Ovary (tissue), 10 donors: ENCODE measurements at regions of chr11 and their contacts with region 1.

Region 1: GRCh38 chr11:113289431-113290187 is 24.8 kb upstream of the TTC12 start:
- DNase-seq: peak; percentile 42 to 82 (median 64)
- H3K4me3 ChIP-seq: no peak overlapping the region
- H3K27ac ChIP-seq: no peak overlapping the region
- H3K4me1 ChIP-seq: no peaks in the 10 kb centered on the region
- H3K27me3 ChIP-seq: no peaks in the 10 kb centered on the region
- CTCF ChIP-seq: peak; percentile 78 to 87 (median 82)
- EP300 ChIP-seq: no peak
- POLR2A ChIP-seq: no peak

Region 2: GRCh38 chr11:112219476-112220232 is 1070.0 kb before region 1 on chr11:
- intact Hi-C with region 1: loop called in 1 of 4 experiments (anchors 10 kb)
- DNase-seq: peak in 4 of 5 donors; percentile 12 to 43 (median 24)
- H3K4me3 ChIP-seq: no peak overlapping the region
- H3K27ac ChIP-seq: no peak overlapping the region
- H3K4me1 ChIP-seq: no peaks in the 10 kb centered on the region
- H3K27me3 ChIP-seq: no peaks in the 10 kb centered on the region
- CTCF ChIP-seq: peak; percentile 59 to 79 (median 78)
- EP300 ChIP-seq: no peak
- POLR2A ChIP-seq: no peak

Region 3: DNA sequence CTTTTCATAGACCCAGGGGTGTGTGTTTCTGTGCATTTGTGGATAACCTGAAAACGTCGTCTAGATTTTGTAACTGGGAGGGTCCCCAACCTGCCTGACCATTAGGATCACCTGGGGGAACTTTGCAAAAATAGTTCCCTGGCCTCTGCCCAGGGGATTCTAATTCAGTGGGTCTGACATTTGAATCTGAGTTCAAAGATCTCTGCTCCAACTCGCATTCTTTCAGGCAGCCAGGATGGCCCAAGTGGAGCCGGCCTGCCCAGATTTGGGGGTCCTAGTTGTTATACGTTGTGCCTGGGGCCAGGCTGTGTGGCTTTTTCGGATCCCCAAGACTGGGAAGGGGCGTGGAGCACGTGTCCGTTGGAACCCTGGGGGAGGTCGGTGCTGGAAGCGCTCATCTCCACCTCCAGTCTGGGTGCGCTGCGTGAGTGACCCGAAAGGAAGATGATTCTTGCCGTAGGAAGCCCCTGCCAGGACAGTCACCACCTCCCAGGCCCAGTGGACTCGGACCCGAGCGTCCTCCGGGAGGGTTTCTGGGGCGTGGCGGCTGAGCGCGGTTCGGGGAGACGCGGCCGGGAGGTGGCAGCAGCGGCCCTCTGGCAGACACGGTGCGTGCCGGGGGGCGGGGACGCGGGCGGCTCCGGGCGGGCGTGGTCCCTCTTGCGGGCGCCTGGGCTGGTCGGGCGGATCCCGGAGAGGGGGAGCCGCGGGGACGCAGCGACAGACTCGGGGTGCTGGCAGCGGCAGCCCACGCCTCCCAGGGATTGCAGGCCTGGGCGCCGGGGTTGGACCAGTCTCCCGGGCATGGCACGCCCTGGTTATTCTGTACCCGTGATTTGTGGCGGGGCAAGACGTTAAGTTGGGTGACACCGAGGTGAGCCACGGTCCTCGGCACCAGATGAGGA is 999.8 kb before region 1 on chr11:
- intact Hi-C with region 1: loop called in 2 of 4 experiments (anchors 5 to 10 kb)
- DNase-seq: peak; percentile 69 to 87 (median 80)
- H3K4me3 ChIP-seq: peak overlapping the region; percentile 33
- H3K27ac ChIP-seq: no peak overlapping the region
- H3K4me1 ChIP-seq: peaks cover 2% of the 10 kb centered on the region
- H3K27me3 ChIP-seq: no peaks in the 10 kb centered on the region
- CTCF ChIP-seq: peak; percentile 87 to 90 (median 87)
- EP300 ChIP-seq: no peak
- POLR2A ChIP-seq: no peak